ENCODE measurements at regions of chr3 and their contacts with region 1.

Region 1: GRCh38 chr3:14261229-14261628 is 82.6 kb downstream of the LSM3 start:
- DNase-seq: peak; percentile 67
- ATAC-seq: peak; percentile 58
- H3K4me3 Mint-ChIP-seq: no peak overlapping the region
- H3K27ac Mint-ChIP-seq: no peak overlapping the region
- H3K4me1 Mint-ChIP-seq: no peaks in the 10 kb centered on the region
- H3K27me3 Mint-ChIP-seq: peaks cover 10% of the 10 kb centered on the region
- CTCF ChIP-seq: peak; percentile 68

Region 2: GRCh38 chr3:14461748-14462324 is 200.6 kb after region 1 on chr3:
- CTCF ChIA-PET with region 1: interaction called, 52 read pairs
- POLR2A ChIA-PET with region 1: no interaction called
- intact Hi-C with region 1: loop called (anchors 1 kb)
- DNase-seq: peak; percentile 25
- ATAC-seq: peak; percentile 70
- H3K4me3 Mint-ChIP-seq: no peak overlapping the region
- H3K27ac Mint-ChIP-seq: no peak overlapping the region
- H3K4me1 Mint-ChIP-seq: peaks cover 7% of the 10 kb centered on the region
- H3K27me3 Mint-ChIP-seq: no peaks in the 10 kb centered on the region
- CTCF ChIP-seq: no peak

Measured in activated B cell treated with CpG ODN at 0.5 μM for 24 hours (primary cell).